ENCODE measurements at regions of chr14 and their contacts with region 1.

Region 1: DNA sequence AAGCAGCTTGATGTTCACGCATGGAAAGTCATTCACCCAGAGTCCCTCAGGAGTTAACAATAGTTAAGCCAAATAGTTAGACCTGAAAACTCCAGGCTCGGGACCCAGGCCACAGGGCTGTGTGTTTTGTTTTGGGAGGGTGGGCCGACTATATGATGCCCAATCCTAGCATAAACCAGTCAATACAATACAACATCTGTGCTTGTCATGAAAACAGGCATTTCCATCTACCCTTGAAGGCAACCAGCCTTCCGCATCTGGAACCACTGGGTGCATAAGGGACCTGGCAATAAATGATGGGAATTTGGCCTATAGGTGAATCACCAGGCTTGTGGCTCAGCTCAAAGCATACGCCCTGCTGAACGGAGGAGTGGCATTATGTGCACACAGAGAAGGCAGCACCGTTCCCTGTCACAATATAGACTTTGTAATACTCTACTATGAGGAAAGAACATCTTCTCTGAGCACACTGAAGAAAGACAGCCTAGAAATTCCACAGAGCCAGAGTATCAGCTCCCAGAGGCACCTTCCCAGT is 91.0 kb upstream of the FOXN3 start:
- DNase-seq: no peak
- H3K4me3 ChIP-seq: no peak overlapping the region
- H3K27ac ChIP-seq: no peak overlapping the region
- H3K27me3 ChIP-seq: no peaks in the 10 kb centered on the region
- CTCF ChIP-seq: no peak

Region 2: DNA sequence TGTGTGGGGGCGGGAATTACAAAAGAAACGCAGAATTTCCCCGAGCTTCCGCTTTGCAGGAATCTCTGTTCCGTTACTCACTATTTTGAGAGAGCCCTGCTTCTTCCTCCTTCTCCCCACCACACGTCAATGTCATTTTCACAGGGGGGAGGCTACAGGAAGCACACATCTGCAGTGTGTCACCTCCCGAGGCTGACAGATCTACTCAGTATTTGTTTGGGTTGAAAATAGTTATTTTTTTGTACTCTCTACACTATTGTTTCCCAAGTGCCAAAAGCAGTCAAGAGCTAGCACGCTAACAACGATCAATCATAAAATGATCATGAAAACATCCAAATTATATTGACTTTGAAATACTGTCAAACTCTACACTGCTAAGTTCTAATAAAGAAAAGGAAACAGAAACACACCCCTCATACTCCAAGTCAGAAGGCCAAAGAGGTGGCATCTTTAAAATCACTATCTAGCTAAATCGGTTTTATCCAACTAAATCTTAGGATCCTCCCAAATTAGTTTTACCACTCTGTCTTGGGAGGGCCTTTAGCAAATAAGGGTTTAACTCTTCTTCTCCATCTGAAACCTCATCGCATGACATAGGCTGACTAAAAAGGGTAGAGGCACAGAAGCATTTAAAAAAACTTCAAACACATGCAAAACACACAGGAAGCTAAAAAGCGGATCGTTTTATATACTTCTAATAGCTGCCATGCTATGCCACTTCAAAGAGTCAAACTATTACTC is 142.8 kb before region 1 on chr14:
- CTCF ChIA-PET with region 1: no interaction called
- POLR2A ChIA-PET with region 1: no interaction called
- DNase-seq: no peak
- H3K4me3 ChIP-seq: no peak overlapping the region
- H3K27ac ChIP-seq: no peak overlapping the region
- H3K27me3 ChIP-seq: no peaks in the 10 kb centered on the region
- CTCF ChIP-seq: no peak

Region 3: GRCh38 chr14:89750281-89750755 is 242.3 kb after region 1 on chr14:
- CTCF ChIA-PET with region 1: no interaction called
- POLR2A ChIA-PET with region 1: interaction called, 12 read pairs
- DNase-seq: peak; percentile 18
- H3K4me3 ChIP-seq: no peak overlapping the region
- H3K27ac ChIP-seq: no peak overlapping the region
- H3K27me3 ChIP-seq: no peaks in the 10 kb centered on the region
- CTCF ChIP-seq: no peak

Measured in AG04450 (cell line).